Gastrocnemius medialis (tissue), 4 donors: ENCODE measurements at regions of chr17 and their contacts with region 1.

Region 1: GRCh38 chr17:58082870-58083490 is at the start of gene DYNLL2:
- DNase-seq: peak; percentile 85 to 92
- ATAC-seq: peak; percentile 71 to 82
- H3K4me3 ChIP-seq: peak within 1 kb of the TSS; percentile 78 to 98 (median 92)
- H3K27ac ChIP-seq: peak within 1 kb of the TSS; percentile 91 to 100 (median 98)
- H3K4me1 ChIP-seq: peaks cover 38 to 41% of the 10 kb centered on the region in 2 donors
- H3K27me3 ChIP-seq: no peaks in the 10 kb centered on the region
- CTCF ChIP-seq: no peak
- POLR2A ChIP-seq: no peak
- total RNA-seq, gene DYNLL2: 14.5 to 28.8 (median 20.4) TPM

Region 2: GRCh38 chr17:56960596-56961538 is 1122.1 kb before region 1 on chr17 and contains the start of gene COIL:
- in situ Hi-C with region 1: no loop called
- intact Hi-C with region 1: loop called (anchors 10 kb)
- DNase-seq: peak; percentile 81 to 87
- ATAC-seq: peak; percentile 97 to 99
- H3K4me3 ChIP-seq: peak within 1 kb of the TSS; percentile 74 to 86 (median 80)
- H3K27ac ChIP-seq: peak within 1 kb of the TSS; percentile 90 to 95 (median 91)
- H3K4me1 ChIP-seq: peaks cover 15 to 25% of the 10 kb centered on the region in 2 donors
- H3K27me3 ChIP-seq: no peaks in the 10 kb centered on the region
- CTCF ChIP-seq: peak; percentile 98 to 100 (median 99)
- POLR2A ChIP-seq: peak in 1 of 2 donors; percentile 41
- total RNA-seq, gene COIL: 6.3 to 9.7 (median 9.0) TPM

Region 3: GRCh38 chr17:57106107-57106835 is 976.7 kb before region 1 on chr17:
- in situ Hi-C with region 1: no loop called
- intact Hi-C with region 1: loop called (anchors 5 kb)
- DNase-seq: peak; percentile 65 to 94
- ATAC-seq: peak; percentile 43 to 57
- H3K4me3 ChIP-seq: no peak overlapping the region
- H3K27ac ChIP-seq: peak overlapping the region; percentile 93 to 99 (median 95)
- H3K4me1 ChIP-seq: peaks cover 62 to 77% of the 10 kb centered on the region in 2 donors
- H3K27me3 ChIP-seq: no peaks in the 10 kb centered on the region
- CTCF ChIP-seq: peak; percentile 26 to 59 (median 53)
- POLR2A ChIP-seq: no peak

Region 4: DNA sequence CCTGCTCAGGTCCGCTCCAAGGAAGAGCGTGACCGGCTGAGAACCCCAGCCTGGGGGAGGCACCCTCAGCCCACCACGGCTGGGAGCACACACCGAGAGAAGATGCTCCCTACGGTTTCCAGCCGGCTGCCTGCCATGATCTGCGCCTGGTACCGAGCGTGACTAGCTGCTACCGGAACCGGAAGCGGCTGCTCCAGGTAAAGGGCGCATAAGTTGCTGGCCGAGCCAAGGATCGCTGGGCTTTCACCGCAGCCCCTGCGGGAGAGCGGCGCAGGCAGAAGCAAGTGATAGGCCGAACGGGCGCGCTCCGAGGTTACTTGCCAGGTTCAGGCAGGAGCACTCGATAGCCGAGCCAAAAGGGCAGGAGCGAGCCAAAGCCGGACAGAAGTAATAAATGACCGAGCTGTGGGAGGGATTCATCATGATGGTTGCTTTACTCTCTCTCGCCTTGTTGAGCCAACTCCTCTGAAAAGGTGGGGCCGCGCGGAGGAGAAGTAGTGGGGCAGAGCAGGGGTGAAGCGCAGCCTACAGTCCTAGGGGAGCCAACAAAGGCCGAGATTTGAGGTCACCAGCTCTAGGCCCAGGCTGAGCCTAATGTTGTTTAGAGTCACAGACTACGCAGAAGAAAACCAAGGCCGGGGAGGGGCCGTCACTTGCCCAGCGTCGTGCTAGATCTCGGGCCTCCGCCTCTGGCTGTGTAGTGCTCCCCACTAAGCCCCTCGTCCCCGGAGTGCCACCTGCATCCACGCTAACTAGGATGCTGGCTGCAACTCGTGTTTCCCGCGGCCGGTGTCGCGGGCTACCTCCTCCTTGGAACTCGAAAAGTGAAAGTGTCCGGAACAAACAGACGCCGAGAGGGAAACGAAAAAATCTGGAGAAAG is 232.9 kb before region 1 on chr17 and contains the start of gene MRPS23:
- in situ Hi-C with region 1: loop called in 1 of 4 experiments (anchors 25 kb)
- intact Hi-C with region 1: loop called (anchors 5 kb)
- DNase-seq: peak; percentile 98 to 99
- ATAC-seq: peak; percentile 63 to 72
- H3K4me3 ChIP-seq: peak within 1 kb of the TSS; percentile 82 to 98 (median 88)
- H3K27ac ChIP-seq: peak within 1 kb of the TSS; percentile 91 to 98 (median 96)
- H3K4me1 ChIP-seq: peaks cover 52% of the 10 kb centered on the region in 2 donors
- H3K27me3 ChIP-seq: no peaks in the 10 kb centered on the region
- CTCF ChIP-seq: peak in 1 of 5 experiments; percentile 9
- POLR2A ChIP-seq: peak; percentile 83 to 87
- total RNA-seq, gene MRPS23: 24.3 to 47.2 (median 35.5) TPM

Region 5: DNA sequence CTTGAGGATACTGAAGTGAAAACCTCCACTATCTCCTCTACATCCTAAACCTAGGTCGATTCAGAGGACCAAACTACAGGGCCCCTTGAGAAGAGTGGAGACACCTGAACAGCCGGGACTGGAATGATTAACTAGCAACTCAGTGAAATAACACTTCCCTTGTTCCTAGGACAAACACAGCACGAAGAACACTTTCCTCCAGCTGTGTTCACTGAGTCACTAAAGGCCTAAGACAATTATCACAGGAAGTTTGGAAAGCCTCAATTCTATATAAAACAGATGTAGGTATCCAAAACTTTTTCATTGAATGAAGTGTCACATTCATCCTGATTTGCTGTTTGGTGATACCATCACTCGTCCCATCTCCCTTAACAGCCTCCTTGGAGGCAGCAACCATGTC is 112.3 kb before region 1 on chr17:
- in situ Hi-C with region 1: no loop called
- intact Hi-C with region 1: no loop called
- DNase-seq: no peak
- ATAC-seq: no peak
- H3K4me3 ChIP-seq: no peak overlapping the region
- H3K27ac ChIP-seq: peak overlapping the region in 1 of 4 donors; percentile 49
- H3K4me1 ChIP-seq: peaks cover 17 to 30% of the 10 kb centered on the region in 2 donors
- H3K27me3 ChIP-seq: no peaks in the 10 kb centered on the region
- CTCF ChIP-seq: no peak
- POLR2A ChIP-seq: no peak

Region 6: DNA sequence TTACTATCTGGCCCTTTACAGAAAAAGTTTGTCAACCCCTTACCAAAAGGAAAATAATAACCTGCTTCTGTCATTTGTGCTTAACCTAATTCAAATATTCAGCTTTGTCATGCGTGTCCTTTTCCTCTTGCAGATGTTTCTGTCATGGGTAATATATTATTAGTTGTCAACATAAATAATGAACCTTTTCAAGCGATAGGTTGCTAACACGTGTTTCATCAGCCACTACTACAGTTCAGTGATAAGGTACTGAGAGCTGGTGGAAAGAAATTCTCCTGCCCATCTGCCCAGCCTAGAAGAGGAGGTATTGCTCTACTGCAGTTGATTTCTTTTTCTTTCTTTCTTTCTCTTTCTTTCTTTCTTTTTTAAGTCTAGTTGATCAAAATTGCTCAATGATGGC is 63.9 kb before region 1 on chr17:
- in situ Hi-C with region 1: loop called in 1 of 4 experiments (anchors 10 kb)
- intact Hi-C with region 1: no loop called
- DNase-seq: no peak
- ATAC-seq: no peak
- H3K4me3 ChIP-seq: no peak overlapping the region
- H3K27ac ChIP-seq: no peak overlapping the region
- H3K4me1 ChIP-seq: no peaks in the 10 kb centered on the region
- H3K27me3 ChIP-seq: no peaks in the 10 kb centered on the region
- CTCF ChIP-seq: no peak
- POLR2A ChIP-seq: no peak

Region 7: GRCh38 chr17:58219001-58219788 is 136.2 kb after region 1 on chr17 and contains the start of gene MKS1:
- in situ Hi-C with region 1: no loop called
- intact Hi-C with region 1: loop called (anchors 2 kb)
- DNase-seq: peak; percentile 85 to 92
- ATAC-seq: peak; percentile 95 to 98
- H3K4me3 ChIP-seq: peak within 1 kb of the TSS; percentile 62 to 88 (median 78)
- H3K27ac ChIP-seq: peak within 1 kb of the TSS; percentile 75 to 86 (median 79)
- H3K4me1 ChIP-seq: peaks cover 7 to 9% of the 10 kb centered on the region in 2 donors
- H3K27me3 ChIP-seq: no peaks in the 10 kb centered on the region
- CTCF ChIP-seq: peak; percentile 59 to 83 (median 66)
- POLR2A ChIP-seq: peak in 1 of 2 donors; percentile 20
- total RNA-seq, gene MKS1: 2.2 to 6.7 (median 2.8) TPM

Region 8: DNA sequence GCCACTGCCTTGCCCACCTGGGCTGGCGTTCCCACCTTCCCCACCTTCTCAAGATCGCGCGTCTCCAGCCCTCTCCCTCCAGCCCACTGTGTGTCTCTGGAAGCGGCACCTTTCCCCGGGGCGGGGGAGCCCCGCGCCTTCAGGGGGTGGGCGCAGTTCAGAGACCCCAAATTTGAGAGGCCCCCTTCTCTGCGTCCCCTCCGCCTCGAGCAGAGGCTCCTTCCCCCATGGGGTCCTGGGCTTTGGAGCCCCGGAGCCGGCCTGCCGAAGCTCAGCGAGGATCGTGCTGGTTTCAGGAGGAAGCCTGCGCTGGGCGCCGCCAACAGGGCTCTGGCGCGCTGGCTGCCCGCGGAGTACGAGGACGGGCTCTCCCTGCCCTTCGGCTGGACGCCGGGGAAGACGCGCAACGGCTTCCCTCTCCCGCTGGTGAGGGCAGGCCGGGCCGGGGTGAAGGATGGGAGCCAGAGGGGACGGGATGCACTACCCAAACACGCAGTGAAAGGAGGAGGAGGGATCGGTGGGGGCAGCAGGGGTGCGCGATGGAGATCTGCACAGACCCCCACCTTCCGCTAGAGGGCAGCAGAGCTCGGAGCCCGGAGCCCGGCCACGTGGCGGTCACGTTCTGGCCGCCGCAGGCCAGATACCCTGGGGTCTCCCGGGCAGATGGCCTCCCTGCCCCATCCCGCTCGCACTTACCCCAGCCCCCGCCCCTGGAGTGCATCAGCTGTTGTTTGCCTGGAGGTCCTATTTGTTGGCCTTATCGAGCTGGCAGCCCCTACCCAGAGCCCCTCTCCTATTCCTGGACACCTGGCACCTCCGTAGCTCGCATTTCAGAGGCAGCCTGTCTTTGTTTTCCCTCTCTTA is 166.5 kb after region 1 on chr17:
- in situ Hi-C with region 1: no loop called
- intact Hi-C with region 1: no loop called
- DNase-seq: peak; percentile 29 to 39
- ATAC-seq: peak; percentile 74 to 89
- H3K4me3 ChIP-seq: peak overlapping the region; percentile 46 to 62 (median 50)
- H3K27ac ChIP-seq: no peak overlapping the region
- H3K4me1 ChIP-seq: peaks cover 0 to 10% of the 10 kb centered on the region in 2 donors
- H3K27me3 ChIP-seq: peaks cover 9 to 16% (median 9%) of the 10 kb centered on the region in 3 donors
- CTCF ChIP-seq: peak; percentile 58 to 94 (median 86)
- POLR2A ChIP-seq: no peak